ENCODE measurements at regions of chr11 and their contacts with region 1.

Region 1: GRCh38 chr11:14249121-14249963 is 109.6 kb downstream of the RRAS2 start:
- DNase-seq: peak; percentile 77
- ATAC-seq: peak; percentile 77
- H3K4me3 ChIP-seq: no peak overlapping the region
- H3K27ac ChIP-seq: no peak overlapping the region
- H3K4me1 ChIP-seq: no peaks in the 10 kb centered on the region
- H3K27me3 ChIP-seq: no peaks in the 10 kb centered on the region
- CTCF ChIP-seq: peak; percentile 94

Region 2: DNA sequence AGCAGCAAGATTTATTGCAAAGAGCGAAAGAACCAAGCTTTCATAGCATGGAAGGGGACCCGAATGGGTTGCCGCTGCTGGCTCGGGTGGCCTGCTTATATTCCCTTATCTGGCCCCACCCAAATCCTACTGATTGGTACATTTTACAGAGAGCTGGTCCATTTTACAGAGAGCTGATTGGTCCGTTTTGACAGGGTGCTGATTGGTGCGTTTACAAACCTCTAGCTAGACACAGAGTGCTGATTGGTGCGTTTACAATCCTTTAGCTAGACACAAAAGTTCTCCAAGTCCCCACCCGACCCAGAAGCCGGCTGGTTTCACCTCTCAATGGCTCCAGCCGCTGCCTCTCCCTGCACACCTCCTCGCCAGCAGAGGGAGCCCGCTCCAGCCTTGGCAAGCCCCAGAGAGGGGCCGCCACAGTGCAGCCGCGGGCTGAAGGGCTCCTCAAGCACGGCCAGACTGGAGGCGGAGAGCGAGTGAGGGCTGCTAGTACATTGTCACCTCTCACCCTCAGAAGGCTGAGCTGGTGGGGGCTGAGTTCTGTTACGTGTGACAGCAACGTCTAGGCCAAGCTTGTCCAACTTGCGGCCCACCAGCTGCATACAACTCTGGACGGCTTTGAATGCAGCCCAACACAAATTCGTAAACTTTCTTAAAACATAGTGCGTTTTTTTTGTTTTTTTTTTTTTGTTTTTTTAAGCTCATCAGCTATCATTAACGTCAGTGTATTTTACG is 762.2 kb before region 1 on chr11:
- CTCF ChIA-PET with region 1: no interaction called
- POLR2A ChIA-PET with region 1: no interaction called
- intact Hi-C with region 1: loop called (anchors 5 kb)
- DNase-seq: no peak
- ATAC-seq: peak; percentile 29; the same call in 1 of the 2 replicates
- H3K4me3 ChIP-seq: no peak overlapping the region
- H3K27ac ChIP-seq: no peak overlapping the region
- H3K4me1 ChIP-seq: no peaks in the 10 kb centered on the region
- H3K27me3 ChIP-seq: peaks cover 7% of the 10 kb centered on the region
- CTCF ChIP-seq: peak; percentile 16; the same call in 1 of the 2 replicates

Region 3: DNA sequence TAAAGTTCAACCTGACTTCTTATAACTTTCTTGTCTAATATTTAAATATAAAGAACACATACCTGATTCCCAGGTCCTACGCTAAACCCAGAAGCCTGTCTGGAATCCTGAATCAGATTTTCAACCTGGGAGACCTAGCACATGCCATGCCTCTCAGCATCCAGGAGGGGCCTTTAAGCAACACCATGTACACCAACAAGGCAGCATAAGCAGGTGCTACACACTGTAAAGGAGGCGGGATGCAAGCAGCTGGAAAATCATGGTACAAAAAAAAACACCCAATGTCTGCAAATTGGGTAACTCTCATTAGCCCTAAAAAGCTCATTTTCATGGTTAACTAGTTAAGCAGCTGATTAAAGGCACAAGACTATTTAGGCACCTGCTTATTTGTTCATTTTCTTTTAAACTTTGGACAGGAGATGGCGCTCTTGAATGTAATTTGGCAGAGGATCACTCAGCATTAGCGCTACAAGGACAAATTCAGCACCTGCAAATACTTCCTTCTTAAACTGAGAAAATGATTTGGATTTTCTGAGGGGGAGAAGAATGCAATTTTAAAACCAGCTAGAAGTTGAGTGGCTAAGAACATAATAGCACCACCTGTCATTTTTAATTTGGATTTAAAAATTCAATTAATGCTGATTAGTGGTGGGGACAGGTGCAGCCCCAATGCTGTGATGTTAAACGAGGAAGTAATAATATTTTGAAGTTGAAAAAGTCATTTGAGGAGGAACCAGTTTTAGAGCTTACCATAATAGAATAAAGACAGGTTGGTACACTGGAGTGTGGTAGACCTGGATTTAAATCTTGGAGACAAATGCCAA is 476.9 kb before region 1 on chr11:
- CTCF ChIA-PET with region 1: interaction called, 3 read pairs
- POLR2A ChIA-PET with region 1: no interaction called
- intact Hi-C with region 1: loop called (anchors 1 kb)
- DNase-seq: peak; percentile 76
- ATAC-seq: peak; percentile 67
- H3K4me3 ChIP-seq: no peak overlapping the region
- H3K27ac ChIP-seq: no peak overlapping the region
- H3K4me1 ChIP-seq: no peaks in the 10 kb centered on the region
- H3K27me3 ChIP-seq: no peaks in the 10 kb centered on the region
- CTCF ChIP-seq: peak; percentile 80

Region 4: DNA sequence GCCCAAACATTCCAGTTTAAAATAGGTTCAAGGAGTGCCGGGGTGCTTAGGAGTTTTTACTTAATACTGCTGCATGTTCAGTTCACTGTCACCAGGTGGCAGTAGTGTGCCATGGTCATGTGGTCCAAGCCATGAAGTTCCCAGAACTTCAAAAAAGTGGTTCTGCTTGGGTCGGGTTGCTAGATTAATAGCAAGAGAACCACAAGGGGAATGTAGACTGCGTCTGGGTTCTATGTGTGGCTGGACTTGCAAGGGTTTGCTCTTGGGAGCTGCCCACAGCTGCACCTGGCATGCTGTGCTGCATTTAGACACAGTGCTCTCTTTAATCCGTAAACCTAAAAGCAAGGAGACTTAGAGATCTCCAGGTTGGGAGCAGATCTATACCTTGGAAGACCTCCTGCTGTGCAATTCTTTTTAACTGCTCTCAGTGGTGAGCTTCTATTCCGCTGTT is 293.3 kb before region 1 on chr11:
- CTCF ChIA-PET with region 1: interaction called, 3 read pairs
- POLR2A ChIA-PET with region 1: no interaction called
- intact Hi-C with region 1: loop called (anchors 1 kb)
- DNase-seq: peak; percentile 76
- ATAC-seq: peak; percentile 53; the same call in 1 of the 2 replicates
- H3K4me3 ChIP-seq: no peak overlapping the region
- H3K27ac ChIP-seq: no peak overlapping the region
- H3K4me1 ChIP-seq: peaks cover 5% of the 10 kb centered on the region; the same call in 1 of the 2 replicates
- H3K27me3 ChIP-seq: peaks cover 7% of the 10 kb centered on the region; the same call in 1 of the 2 replicates
- CTCF ChIP-seq: peak; percentile 89